ENCODE measurements at regions of chr6 and their contacts with region 1.

Region 1: GRCh38 chr6:6515691-6516607 is 72.6 kb upstream of the LY86 start:
- DNase-seq: peak; percentile 86
- H3K4me3 Mint-ChIP-seq: no peak overlapping the region
- H3K27ac Mint-ChIP-seq: peak overlapping the region; percentile 46
- H3K4me1 Mint-ChIP-seq: peaks cover 23% of the 10 kb centered on the region
- H3K27me3 Mint-ChIP-seq: peaks cover 68% of the 10 kb centered on the region

Region 2: GRCh38 chr6:4788953-4789584 is 1726.9 kb before region 1 on chr6:
- CTCF ChIA-PET with region 1: no interaction called
- intact Hi-C with region 1: loop called (anchors 5 kb)
- DNase-seq: no peak
- H3K4me3 Mint-ChIP-seq: no peak overlapping the region
- H3K27ac Mint-ChIP-seq: no peak overlapping the region
- H3K4me1 Mint-ChIP-seq: peaks cover 55% of the 10 kb centered on the region
- H3K27me3 Mint-ChIP-seq: no peaks in the 10 kb centered on the region

Measured in activated naive CD4-positive, alpha-beta T cell treated with anti-CD3 and anti-CD28 coated beads for 36 hours (primary cell).